Spleen (tissue), 13 donors: ENCODE measurements at regions of chr4 and their contacts with region 1.

Region 1: DNA sequence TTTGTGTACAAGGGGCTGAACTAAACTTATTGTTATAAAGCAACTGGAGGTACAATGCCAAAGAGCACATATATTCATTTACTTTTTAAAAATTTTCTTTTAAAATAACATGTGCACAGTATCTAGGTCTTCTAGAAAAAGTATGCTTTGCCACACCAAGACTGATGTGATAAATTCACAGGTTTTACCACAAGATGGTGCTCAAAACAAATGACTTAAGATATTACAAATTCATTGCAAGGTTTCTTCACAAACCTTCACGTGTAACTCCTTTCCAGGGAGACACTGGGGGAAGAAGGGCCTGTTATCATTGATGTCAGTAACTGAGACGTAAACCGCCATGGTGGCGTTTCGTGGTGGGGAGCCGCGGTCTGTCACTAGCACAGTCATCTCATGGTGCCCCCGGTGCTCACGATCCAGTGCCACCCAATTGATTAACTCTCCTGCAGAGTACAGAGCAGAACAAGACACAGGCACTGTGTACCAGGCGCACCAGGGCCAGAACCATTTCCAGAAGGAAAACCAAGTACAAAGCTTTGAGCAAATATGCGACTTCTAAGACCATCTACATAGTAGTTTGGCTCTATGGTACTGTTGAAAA is 162.2 kb downstream of the DCHS2 start:
- DNase-seq: no peak
- H3K4me3 ChIP-seq: no peak overlapping the region
- H3K27ac ChIP-seq: no peak overlapping the region
- H3K4me1 ChIP-seq: peaks cover 3 to 12% (median 8%) of the 10 kb centered on the region in 6 donors
- H3K27me3 ChIP-seq: peaks cover 0 to 39% (median 16%) of the 10 kb centered on the region in 7 donors
- CTCF ChIP-seq: peak in 5 of 11 experiments; percentile 8 to 47 (median 32)
- POLR2A ChIP-seq: no peak

Region 2: GRCh38 chr4:154516318-154517029 is 187.1 kb after region 1 on chr4:
- intact Hi-C with region 1: loop called (anchors 10 kb)
- DNase-seq: no peak
- H3K4me3 ChIP-seq: no peak overlapping the region
- H3K27ac ChIP-seq: no peak overlapping the region
- H3K4me1 ChIP-seq: no peaks in the 10 kb centered on the region
- H3K27me3 ChIP-seq: peaks cover 0 to 23% (median 0%) of the 10 kb centered on the region in 7 donors
- CTCF ChIP-seq: no peak
- POLR2A ChIP-seq: no peak